Esophagus squamous epithelium (tissue), 5 donors: ENCODE measurements at regions of chr17 and their contacts with region 1.

Region 1: GRCh38 chr17:58082870-58083490 is at the start of gene DYNLL2:
- DNase-seq: peak; percentile 75
- H3K4me3 ChIP-seq: peak within 1 kb of the TSS; percentile 81 to 100 (median 99)
- H3K27ac ChIP-seq: peak within 1 kb of the TSS; percentile 93 to 98 (median 98)
- H3K4me1 ChIP-seq: peaks cover 15 to 50% (median 19%) of the 10 kb centered on the region in 3 donors
- H3K27me3 ChIP-seq: no peaks in the 10 kb centered on the region
- CTCF ChIP-seq: no peak
- POLR2A ChIP-seq: no peak
- total RNA-seq, gene DYNLL2: 13.0 to 18.5 (median 14.4) TPM

Region 2: GRCh38 chr17:57955183-57955931 is 127.6 kb before region 1 on chr17 and contains the start of gene CUEDC1:
- intact Hi-C with region 1: no loop called
- DNase-seq: no peak
- H3K4me3 ChIP-seq: peak within 1 kb of the TSS; percentile 67 to 92 (median 88)
- H3K27ac ChIP-seq: peak within 1 kb of the TSS; percentile 93 to 98 (median 95)
- H3K4me1 ChIP-seq: peaks cover 35 to 58% (median 38%) of the 10 kb centered on the region in 3 donors
- H3K27me3 ChIP-seq: no peaks in the 10 kb centered on the region
- CTCF ChIP-seq: peak in 2 of 6 experiments; percentile 39 to 57
- POLR2A ChIP-seq: no peak
- total RNA-seq, gene CUEDC1: 7.4 to 27.3 (median 18.4) TPM

Region 3: GRCh38 chr17:58006924-58007780 is 75.8 kb before region 1 on chr17 and contains the start of gene SRSF1:
- intact Hi-C with region 1: loop called (anchors 5 kb)
- DNase-seq: peak; percentile 85
- H3K4me3 ChIP-seq: peak within 1 kb of the TSS; percentile 76 to 100 (median 92)
- H3K27ac ChIP-seq: peak within 1 kb of the TSS; percentile 96 to 100 (median 99)
- H3K4me1 ChIP-seq: peaks cover 15 to 52% (median 34%) of the 10 kb centered on the region in 3 donors
- H3K27me3 ChIP-seq: no peaks in the 10 kb centered on the region
- CTCF ChIP-seq: no peak
- POLR2A ChIP-seq: peak in 3 of 4 donors; percentile 87 to 95 (median 93)
- total RNA-seq, gene SRSF1: 134 to 223 (median 200) TPM

Region 4: DNA sequence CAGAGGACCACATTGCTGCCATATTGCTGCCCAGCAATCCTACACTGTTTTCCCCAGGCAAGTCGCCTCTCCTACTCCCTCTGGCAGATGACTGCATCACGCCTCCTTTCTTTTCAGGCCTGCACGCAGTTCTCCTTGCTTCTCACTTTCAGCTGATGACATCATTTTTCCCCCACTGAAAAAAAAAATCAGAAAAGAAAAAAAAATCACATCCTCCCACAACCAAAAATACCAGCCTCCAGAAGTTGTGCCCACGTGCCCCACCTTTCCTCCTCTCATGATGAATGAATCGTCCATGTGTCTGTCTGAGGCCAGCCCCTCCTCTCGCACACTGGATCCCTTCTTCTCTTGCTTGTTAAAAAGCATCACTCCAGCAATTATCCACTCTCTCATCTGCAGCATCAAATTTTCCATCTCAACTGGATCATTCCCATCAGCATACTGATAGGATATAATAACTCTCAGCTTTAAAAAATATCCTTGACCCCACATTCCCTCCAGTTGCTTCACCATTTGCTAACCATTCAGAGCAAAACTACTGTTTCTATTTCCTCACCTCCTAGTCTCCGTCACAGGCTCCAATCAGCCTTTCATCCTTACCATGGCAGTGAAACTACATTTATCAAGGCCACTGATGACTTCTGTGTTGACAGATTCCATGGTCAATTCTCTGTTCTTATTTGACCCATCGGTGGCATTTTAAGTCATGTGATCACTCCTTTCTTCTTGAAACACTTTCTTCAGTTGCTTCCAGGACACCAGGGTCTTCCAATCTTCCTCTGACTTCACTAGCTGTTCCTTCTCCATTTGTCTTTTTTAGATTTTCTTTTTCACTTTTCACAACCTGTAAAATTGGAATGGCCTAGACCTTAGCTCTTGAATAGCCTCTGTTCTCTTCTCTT is 29.8 kb before region 1 on chr17:
- intact Hi-C with region 1: no loop called
- DNase-seq: no peak
- H3K4me3 ChIP-seq: no peak overlapping the region
- H3K27ac ChIP-seq: no peak overlapping the region
- H3K4me1 ChIP-seq: no peaks in the 10 kb centered on the region
- H3K27me3 ChIP-seq: peaks cover 0 to 6% (median 0%) of the 10 kb centered on the region in 4 donors
- CTCF ChIP-seq: no peak
- POLR2A ChIP-seq: no peak

Region 5: GRCh38 chr17:58377093-58377601 is 294.2 kb after region 1 on chr17:
- intact Hi-C with region 1: no loop called
- DNase-seq: no peak
- H3K4me3 ChIP-seq: no peak overlapping the region
- H3K27ac ChIP-seq: peak overlapping the region in 3 of 4 donors; percentile 60 to 78 (median 65)
- H3K4me1 ChIP-seq: peaks cover 3 to 31% (median 4%) of the 10 kb centered on the region in 3 donors
- H3K27me3 ChIP-seq: no peaks in the 10 kb centered on the region
- CTCF ChIP-seq: no peak
- POLR2A ChIP-seq: no peak